SK-N-SH (cell line): ENCODE measurements at regions of chr6 and their contacts with region 1.

Region 1: GRCh38 chr6:32971581-32972352 is 3.4 kb downstream of the BRD2 start:
- DNase-seq: peak; percentile 92
- H3K4me3 ChIP-seq: peak overlapping the region; percentile 83 to 88
- H3K27ac ChIP-seq: peak overlapping the region; percentile 97 to 99
- H3K4me1 ChIP-seq: peaks cover 21 to 28% of the 10 kb centered on the region in 2 experiments; a peak in 3 of 4 replicates
- H3K27me3 ChIP-seq: no peaks in the 10 kb centered on the region
- CTCF ChIP-seq: no peak
- EP300 ChIP-seq: peak; percentile 7 to 55; a peak in 2 of 4 replicates
- RAD21 ChIP-seq: no peak

Region 2: DNA sequence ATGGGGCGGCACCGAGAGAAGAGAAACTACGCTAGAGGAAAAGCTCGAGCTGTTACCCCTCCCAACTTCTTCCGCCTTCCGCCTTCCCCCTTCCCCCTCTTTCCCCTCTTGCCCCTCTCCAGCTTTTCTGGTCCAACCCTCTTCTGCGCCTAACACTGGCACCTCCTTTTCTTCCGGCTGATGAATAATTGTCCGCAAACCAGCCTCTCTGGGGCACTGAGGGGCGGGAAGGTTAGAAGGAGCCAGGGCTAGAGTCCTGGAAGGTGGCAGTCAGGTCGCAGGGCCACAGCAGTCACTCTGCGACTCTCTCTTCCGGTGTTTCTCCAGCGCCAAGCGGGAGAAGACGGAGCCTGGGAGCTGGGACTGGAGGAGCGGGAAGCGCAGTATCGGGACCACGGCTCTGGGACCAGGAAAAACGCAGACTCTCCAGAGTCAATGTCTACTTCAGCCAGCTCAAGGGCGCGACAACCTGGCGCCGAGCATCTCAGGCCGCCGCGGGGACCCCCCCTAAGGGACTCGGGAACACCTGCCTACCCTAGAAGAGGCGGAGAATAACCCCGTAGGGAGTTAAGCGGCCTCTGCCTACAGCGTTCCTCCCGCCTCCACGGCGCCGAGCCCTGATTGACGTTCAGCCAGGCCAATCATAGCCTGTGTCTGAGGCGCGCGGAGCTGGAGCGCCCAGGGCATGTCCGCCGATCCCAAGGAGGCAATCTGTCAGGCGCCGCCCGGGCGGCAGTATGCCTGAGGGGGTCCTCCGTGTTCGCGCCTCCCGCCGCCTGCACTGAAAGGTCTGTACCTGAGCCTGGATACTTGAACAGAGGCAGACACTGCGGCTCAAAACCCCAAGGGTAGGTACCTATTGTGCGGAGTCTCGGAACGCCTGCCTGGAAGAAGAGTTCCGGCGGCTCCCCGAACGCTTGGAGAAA is 77.4 kb before region 1 on chr6:
- CTCF ChIA-PET with region 1: interaction called, 10 read pairs
- POLR2A ChIA-PET with region 1: interaction called, 50 read pairs
- DNase-seq: peak; percentile 98
- H3K4me3 ChIP-seq: peak overlapping the region; percentile 73 to 90
- H3K27ac ChIP-seq: peak overlapping the region; percentile 73 to 92
- H3K4me1 ChIP-seq: peaks cover 0 to 8% of the 10 kb centered on the region in 2 experiments; a peak in 2 of 4 replicates
- H3K27me3 ChIP-seq: no peaks in the 10 kb centered on the region
- CTCF ChIP-seq: peak; percentile 35
- EP300 ChIP-seq: no peak
- RAD21 ChIP-seq: no peak

Region 3: GRCh38 chr6:32940656-32941213 is 31.0 kb before region 1 on chr6 and contains the start of gene HLA-DMB:
- CTCF ChIA-PET with region 1: interaction called, 391 read pairs
- POLR2A ChIA-PET with region 1: interaction called, 9 read pairs
- DNase-seq: peak; percentile 53
- H3K4me3 ChIP-seq: peak within 1 kb of the TSS; percentile 36 to 42; a peak in 3 of 4 replicates
- H3K27ac ChIP-seq: no peak within 1 kb of the TSS
- H3K4me1 ChIP-seq: peaks cover 0 to 3% of the 10 kb centered on the region in 2 experiments; a peak in 1 of 4 replicates
- H3K27me3 ChIP-seq: peaks cover 51% of the 10 kb centered on the region; the same call in 1 of the 2 replicates
- CTCF ChIP-seq: no peak
- EP300 ChIP-seq: no peak
- RAD21 ChIP-seq: no peak
- polyA plus RNA-seq, gene HLA-DMB: 0.10 TPM in 1 of 2 replicates, not detected in the other

Region 4: GRCh38 chr6:32952817-32953739 is 18.7 kb before region 1 on chr6 and contains the start of gene HLA-DMA:
- CTCF ChIA-PET with region 1: interaction called, 86 read pairs
- POLR2A ChIA-PET with region 1: interaction called, 7 read pairs
- DNase-seq: peak; percentile 42
- H3K4me3 ChIP-seq: peak within 1 kb of the TSS in 1 of 2 experiments; percentile 27; a peak in 1 of 4 replicates
- H3K27ac ChIP-seq: no peak within 1 kb of the TSS
- H3K4me1 ChIP-seq: peaks cover 0 to 6% of the 10 kb centered on the region in 2 experiments; a peak in 1 of 4 replicates
- H3K27me3 ChIP-seq: no peaks in the 10 kb centered on the region
- CTCF ChIP-seq: peak; percentile 77
- EP300 ChIP-seq: no peak
- RAD21 ChIP-seq: peak; percentile 47
- polyA plus RNA-seq, gene HLA-DMA: 1.2 and 1.5 TPM in 2 replicates

Region 5: GRCh38 chr6:33317669-33318425 is 346.1 kb after region 1 on chr6 and contains the start of gene ZBTB22:
- CTCF ChIA-PET with region 1: no interaction called
- POLR2A ChIA-PET with region 1: interaction called, 11 read pairs
- DNase-seq: peak; percentile 92
- H3K4me3 ChIP-seq: peak within 1 kb of the TSS; percentile 56
- H3K27ac ChIP-seq: peak within 1 kb of the TSS; percentile 88 to 95
- H3K4me1 ChIP-seq: peaks cover 29 to 53% of the 10 kb centered on the region in 2 experiments; a peak in 3 of 4 replicates
- H3K27me3 ChIP-seq: no peaks in the 10 kb centered on the region
- CTCF ChIP-seq: no peak
- EP300 ChIP-seq: no peak
- RAD21 ChIP-seq: no peak
- polyA plus RNA-seq, gene ZBTB22: 19.5 and 22.2 TPM in 2 replicates